Dorsolateral prefrontal cortex (tissue), 120 donors: ENCODE measurements at regions of chr2 and their contacts with region 1.

Region 1: DNA sequence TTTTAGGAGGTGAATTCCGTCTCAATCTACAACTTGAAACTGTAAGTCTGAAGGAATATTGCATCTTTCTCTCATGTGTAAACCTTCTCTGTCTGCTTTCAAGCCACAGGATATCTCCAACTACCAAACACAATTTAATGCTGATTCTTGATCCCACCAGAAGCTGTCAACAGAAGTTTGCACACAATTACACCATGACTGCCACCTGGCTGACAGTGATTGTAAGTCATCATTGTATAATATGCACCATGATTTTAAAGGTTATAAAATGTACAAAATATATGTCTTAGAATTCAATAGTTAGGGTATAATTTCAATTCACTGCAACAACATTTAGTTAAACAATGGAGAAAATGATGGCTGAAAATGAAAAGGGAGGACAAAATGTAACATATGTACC is 18.4 kb downstream of the PREPL start:
- DNase-seq: no peak
- H3K4me3 ChIP-seq: no peak overlapping the region
- H3K27ac ChIP-seq: peak overlapping the region in 6 of 59 donors; percentile 5 to 39 (median 22)
- H3K27me3 ChIP-seq: no peaks in the 10 kb centered on the region
- CTCF ChIP-seq: peak in 51 of 56 donors; percentile 9 to 69 (median 46)

Region 2: DNA sequence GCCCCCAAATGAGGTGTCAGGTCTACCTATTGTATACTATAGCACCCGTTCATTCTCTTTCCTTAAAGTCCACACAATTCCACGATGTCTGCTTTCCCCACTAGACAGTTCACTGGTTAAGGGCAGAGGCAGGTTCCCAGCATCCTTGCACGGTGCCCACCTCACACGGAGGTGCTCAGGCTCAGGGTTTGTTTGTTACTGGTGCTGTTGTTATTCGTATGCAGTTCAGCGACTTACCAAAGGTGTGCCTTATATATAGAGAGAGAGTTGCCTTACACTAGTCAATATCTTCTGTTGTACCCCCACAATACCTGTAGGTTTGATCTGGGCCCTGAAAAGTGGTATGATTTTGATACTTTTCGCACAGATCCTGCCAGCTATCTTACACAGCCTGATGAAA is 37.0 kb before region 1 on chr2:
- intact Hi-C with region 1: loop called in 1 of 2 experiments (anchors 5 kb)
- DNase-seq: no peak
- H3K4me3 ChIP-seq: no peak overlapping the region
- H3K27ac ChIP-seq: no peak overlapping the region
- H3K27me3 ChIP-seq: no peaks in the 10 kb centered on the region
- CTCF ChIP-seq: no peak